ENCODE measurements at regions of chr3 and their contacts with region 1.

Region 1: DNA sequence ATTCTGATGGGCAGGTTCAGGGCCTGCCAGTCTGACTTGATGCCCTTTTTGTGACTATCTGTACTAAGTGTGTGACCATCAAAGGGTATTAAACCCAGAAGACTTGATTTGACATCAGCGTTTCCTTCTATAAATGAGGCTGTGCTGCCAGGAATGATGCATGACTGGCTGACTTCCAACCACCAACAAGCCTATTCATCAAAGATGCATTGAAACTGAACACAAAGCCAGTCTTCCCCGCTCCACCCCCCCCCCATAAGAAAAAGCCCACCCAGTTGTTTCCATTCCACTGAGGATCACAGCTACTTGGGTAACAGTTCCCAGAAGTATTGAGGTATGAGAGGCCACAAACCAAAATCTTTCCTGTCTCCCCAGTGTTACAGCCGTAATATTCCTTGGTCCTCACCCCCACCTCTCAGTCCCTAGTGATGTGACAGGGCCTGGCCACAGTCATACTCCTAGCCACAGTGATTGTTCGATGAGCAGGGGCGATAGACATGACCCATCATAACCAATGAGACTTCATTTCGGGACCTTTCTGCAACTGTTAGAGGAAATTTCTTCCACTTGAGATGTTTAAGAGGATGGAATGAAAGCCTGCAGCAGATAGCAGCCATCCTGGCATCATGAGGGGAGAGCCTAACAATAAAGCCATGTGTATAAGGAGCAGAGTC is 22.6 kb downstream of the SH3BP5 start:
- DNase-seq: no peak
- H3K4me3 ChIP-seq: no peak overlapping the region
- H3K4me3 Mint-ChIP-seq: peak overlapping the region in 7 of 8 donors; percentile 25 to 77 (median 56)
- H3K27ac ChIP-seq: peak overlapping the region; percentile 11
- H3K27ac Mint-ChIP-seq: peak overlapping the region; percentile 63 to 84 (median 80)
- H3K4me1 ChIP-seq: peaks cover 89% of the 10 kb centered on the region
- H3K4me1 Mint-ChIP-seq: peaks cover 55 to 86% (median 69%) of the 10 kb centered on the region in 4 donors
- H3K27me3 ChIP-seq: no peaks in the 10 kb centered on the region
- H3K27me3 Mint-ChIP-seq: no peaks in the 10 kb centered on the region

Region 2: DNA sequence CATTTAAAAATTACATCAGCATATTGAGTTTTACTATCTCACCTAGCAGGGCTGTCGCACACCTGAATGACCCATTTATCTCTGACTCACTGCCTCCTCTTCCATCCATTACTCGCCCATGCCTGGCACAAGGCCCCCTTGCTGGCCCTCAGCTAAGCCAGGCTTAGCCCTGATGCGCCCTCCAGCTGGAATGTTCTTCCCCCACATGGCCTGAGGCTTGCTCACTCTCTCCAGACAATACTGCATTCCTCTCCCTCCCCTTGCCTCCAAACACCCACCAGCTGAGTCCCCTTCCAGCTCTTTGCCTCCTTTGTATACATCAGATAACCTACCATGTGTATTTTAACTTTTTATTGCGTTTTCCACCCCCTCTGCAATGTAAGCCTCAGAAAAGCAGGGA is 15.4 kb after region 1 on chr3:
- CTCF ChIA-PET with region 1: interaction called, 7 read pairs
- POLR2A ChIA-PET with region 1: interaction called, 25 read pairs
- intact Hi-C with region 1: loop called (anchors 1 kb)
- DNase-seq: no peak
- H3K4me3 ChIP-seq: no peak overlapping the region
- H3K4me3 Mint-ChIP-seq: peak overlapping the region in 4 of 8 donors; percentile 17 to 64 (median 30)
- H3K27ac ChIP-seq: no peak overlapping the region
- H3K27ac Mint-ChIP-seq: peak overlapping the region in 6 of 7 donors; percentile 10 to 80 (median 62)
- H3K4me1 ChIP-seq: peaks cover 89% of the 10 kb centered on the region
- H3K4me1 Mint-ChIP-seq: peaks cover 66 to 96% (median 79%) of the 10 kb centered on the region in 4 donors
- H3K27me3 ChIP-seq: no peaks in the 10 kb centered on the region
- H3K27me3 Mint-ChIP-seq: no peaks in the 10 kb centered on the region

Measured in CD4-positive, alpha-beta memory T cell (primary cell).